CD8-positive, alpha-beta T cell (primary cell): ENCODE measurements at regions of chr1 and their contacts with region 1.

Region 1: DNA sequence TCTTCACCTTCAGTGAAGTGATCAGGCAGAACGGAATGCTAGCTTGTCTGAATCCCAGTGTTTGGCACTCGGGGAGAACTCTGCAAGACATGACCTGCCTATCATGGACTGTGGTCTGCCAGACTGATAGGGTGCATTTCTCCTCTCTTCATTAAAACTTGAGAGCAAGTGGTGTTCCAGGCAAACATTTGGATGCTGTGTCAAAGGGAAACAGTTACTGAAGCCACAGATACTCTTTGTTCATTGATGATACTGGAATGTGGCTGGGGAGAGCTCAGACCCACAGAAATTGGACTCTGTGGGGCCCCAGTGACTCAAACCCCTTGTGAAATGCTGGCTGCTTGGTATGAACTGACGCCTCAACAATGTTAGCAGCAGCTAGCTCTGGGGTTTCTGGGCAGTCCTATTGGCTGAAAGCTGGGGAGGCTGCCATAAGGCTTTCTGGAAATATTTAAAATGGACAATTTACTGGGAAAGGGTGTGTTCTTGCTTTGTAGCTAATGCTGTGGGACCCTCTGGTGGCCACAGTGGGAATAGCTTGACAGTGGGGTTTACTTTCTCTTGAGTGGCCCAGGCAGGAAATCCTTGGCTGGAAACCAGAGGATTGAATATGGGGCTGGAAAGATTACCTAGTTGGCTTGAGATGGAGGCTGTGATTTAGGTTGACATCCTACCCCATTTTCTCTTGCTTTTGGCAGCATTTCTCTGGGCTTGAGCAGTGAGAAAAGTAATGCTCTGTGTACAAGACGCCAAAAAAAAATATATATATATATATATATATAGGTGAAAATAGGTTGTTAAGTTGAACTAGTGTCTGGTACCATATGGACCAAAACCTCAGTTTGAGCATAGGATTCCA is 8.0 kb upstream of the S100A10 start:
- DNase-seq: peak; percentile 59 to 85 (median 79)
- ATAC-seq: peak; percentile 83
- H3K4me3 ChIP-seq: no peak overlapping the region
- H3K4me3 Mint-ChIP-seq: no peak overlapping the region
- H3K27ac ChIP-seq: no peak overlapping the region
- H3K27ac Mint-ChIP-seq: no peak overlapping the region
- H3K4me1 ChIP-seq: no peaks in the 10 kb centered on the region
- H3K4me1 Mint-ChIP-seq: no peaks in the 10 kb centered on the region
- H3K27me3 ChIP-seq: no peaks in the 10 kb centered on the region
- H3K27me3 Mint-ChIP-seq: peaks cover 8% of the 10 kb centered on the region
- CTCF ChIP-seq: peak; percentile 91

Region 2: DNA sequence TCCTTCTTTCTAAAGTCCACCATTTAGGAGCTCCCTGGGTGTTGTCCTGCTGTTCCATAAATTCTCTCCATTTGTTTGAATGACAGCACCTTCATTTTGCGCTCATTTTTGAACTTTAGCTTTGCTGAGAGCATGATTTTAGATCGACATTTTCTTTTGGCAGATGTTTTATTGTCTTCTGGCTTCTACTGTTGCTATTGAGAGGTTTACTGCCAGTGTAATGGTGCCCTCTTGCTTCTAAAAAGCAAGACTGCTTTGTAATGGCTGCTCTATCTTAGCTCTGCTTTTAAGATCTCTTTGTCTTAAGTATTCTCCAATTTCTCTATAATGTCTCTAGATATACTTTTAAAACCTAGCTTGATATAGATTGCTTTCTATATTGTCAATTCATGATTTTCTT is 120.2 kb before region 1 on chr1:
- CTCF ChIA-PET with region 1: interaction called, 18 read pairs
- POLR2A ChIA-PET with region 1: no interaction called
- intact Hi-C with region 1: no loop called
- DNase-seq: peak in 1 of 9 experiments; percentile 20
- ATAC-seq: no peak
- H3K4me3 ChIP-seq: no peak overlapping the region
- H3K4me3 Mint-ChIP-seq: no peak overlapping the region
- H3K27ac ChIP-seq: no peak overlapping the region
- H3K27ac Mint-ChIP-seq: no peak overlapping the region
- H3K4me1 ChIP-seq: no peaks in the 10 kb centered on the region
- H3K4me1 Mint-ChIP-seq: peaks cover 3% of the 10 kb centered on the region
- H3K27me3 ChIP-seq: no peaks in the 10 kb centered on the region
- H3K27me3 Mint-ChIP-seq: no peaks in the 10 kb centered on the region
- CTCF ChIP-seq: no peak

Region 3: GRCh38 chr1:151909150-151910149 is 92.2 kb before region 1 on chr1 and contains the start of gene THEM4:
- CTCF ChIA-PET with region 1: interaction called, 14 read pairs
- POLR2A ChIA-PET with region 1: interaction called, 3 read pairs
- intact Hi-C with region 1: no loop called
- DNase-seq: peak; percentile 83 to 96 (median 91)
- ATAC-seq: peak; percentile 82
- H3K4me3 ChIP-seq: peak within 1 kb of the TSS; percentile 60 to 75
- H3K4me3 Mint-ChIP-seq: peak within 1 kb of the TSS; percentile 83
- H3K27ac ChIP-seq: peak within 1 kb of the TSS; percentile 56 to 89
- H3K27ac Mint-ChIP-seq: peak within 1 kb of the TSS; percentile 85
- H3K4me1 ChIP-seq: peaks cover 49% of the 10 kb centered on the region
- H3K4me1 Mint-ChIP-seq: peaks cover 40% of the 10 kb centered on the region
- H3K27me3 ChIP-seq: no peaks in the 10 kb centered on the region
- H3K27me3 Mint-ChIP-seq: no peaks in the 10 kb centered on the region
- CTCF ChIP-seq: no peak
- total RNA-seq, gene THEM4: 14.3 to 16.8 TPM

Region 4: GRCh38 chr1:151939779-151940178 is 61.8 kb before region 1 on chr1:
- CTCF ChIA-PET with region 1: interaction called, 149 read pairs
- POLR2A ChIA-PET with region 1: interaction called, 3 read pairs
- intact Hi-C with region 1: loop called (anchors 1 kb)
- DNase-seq: no peak
- ATAC-seq: no peak
- H3K4me3 ChIP-seq: no peak overlapping the region
- H3K4me3 Mint-ChIP-seq: no peak overlapping the region
- H3K27ac ChIP-seq: no peak overlapping the region
- H3K27ac Mint-ChIP-seq: no peak overlapping the region
- H3K4me1 ChIP-seq: peaks cover 2% of the 10 kb centered on the region
- H3K4me1 Mint-ChIP-seq: peaks cover 9% of the 10 kb centered on the region
- H3K27me3 ChIP-seq: no peaks in the 10 kb centered on the region
- H3K27me3 Mint-ChIP-seq: no peaks in the 10 kb centered on the region
- CTCF ChIP-seq: no peak

Region 5: DNA sequence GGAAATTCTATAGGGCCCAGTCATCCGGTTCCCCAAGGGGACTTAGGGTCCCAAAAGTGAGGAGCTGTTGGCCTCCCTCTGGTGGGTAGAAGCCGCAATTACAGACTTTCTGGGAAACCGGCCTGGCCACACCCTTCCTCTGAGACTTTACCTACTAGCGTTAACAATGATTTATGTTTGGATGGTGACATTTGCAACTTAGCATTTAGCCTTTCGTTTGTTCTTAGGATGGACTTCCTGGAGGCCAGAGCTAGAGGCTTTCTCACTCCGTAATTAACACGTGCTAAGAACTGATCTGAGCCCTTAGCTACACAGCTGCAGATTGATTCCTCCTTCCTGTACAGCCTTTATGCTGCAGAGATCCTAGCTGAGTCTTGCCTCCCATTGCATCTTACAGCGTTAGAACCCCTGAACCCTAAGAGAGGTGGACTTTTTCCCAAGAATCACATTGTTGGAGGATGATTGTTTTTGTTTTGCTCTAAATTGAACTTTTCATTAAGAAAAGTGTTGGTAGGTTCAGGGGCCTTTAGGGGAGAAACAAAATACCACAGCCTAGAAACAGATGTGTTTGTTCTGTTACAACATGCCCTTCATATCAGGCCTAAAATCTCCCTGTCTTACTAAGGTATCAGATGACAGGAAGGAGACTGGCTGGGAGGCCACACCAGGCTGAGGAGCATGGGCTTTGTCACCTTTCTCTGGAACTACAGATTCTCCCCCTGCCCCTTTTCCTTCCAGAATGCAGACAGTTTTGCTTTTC is 33.2 kb after region 1 on chr1:
- CTCF ChIA-PET with region 1: interaction called, 11 read pairs
- POLR2A ChIA-PET with region 1: interaction called, 4 read pairs
- intact Hi-C with region 1: no loop called
- DNase-seq: peak; percentile 39 to 84 (median 65)
- ATAC-seq: peak; percentile 80
- H3K4me3 ChIP-seq: peak overlapping the region; percentile 65 to 86
- H3K4me3 Mint-ChIP-seq: peak overlapping the region; percentile 96
- H3K27ac ChIP-seq: peak overlapping the region; percentile 63 to 88
- H3K27ac Mint-ChIP-seq: peak overlapping the region; percentile 94
- H3K4me1 ChIP-seq: peaks cover 35% of the 10 kb centered on the region
- H3K4me1 Mint-ChIP-seq: peaks cover 54% of the 10 kb centered on the region
- H3K27me3 ChIP-seq: no peaks in the 10 kb centered on the region
- H3K27me3 Mint-ChIP-seq: no peaks in the 10 kb centered on the region
- CTCF ChIP-seq: peak; percentile 74

Region 6: DNA sequence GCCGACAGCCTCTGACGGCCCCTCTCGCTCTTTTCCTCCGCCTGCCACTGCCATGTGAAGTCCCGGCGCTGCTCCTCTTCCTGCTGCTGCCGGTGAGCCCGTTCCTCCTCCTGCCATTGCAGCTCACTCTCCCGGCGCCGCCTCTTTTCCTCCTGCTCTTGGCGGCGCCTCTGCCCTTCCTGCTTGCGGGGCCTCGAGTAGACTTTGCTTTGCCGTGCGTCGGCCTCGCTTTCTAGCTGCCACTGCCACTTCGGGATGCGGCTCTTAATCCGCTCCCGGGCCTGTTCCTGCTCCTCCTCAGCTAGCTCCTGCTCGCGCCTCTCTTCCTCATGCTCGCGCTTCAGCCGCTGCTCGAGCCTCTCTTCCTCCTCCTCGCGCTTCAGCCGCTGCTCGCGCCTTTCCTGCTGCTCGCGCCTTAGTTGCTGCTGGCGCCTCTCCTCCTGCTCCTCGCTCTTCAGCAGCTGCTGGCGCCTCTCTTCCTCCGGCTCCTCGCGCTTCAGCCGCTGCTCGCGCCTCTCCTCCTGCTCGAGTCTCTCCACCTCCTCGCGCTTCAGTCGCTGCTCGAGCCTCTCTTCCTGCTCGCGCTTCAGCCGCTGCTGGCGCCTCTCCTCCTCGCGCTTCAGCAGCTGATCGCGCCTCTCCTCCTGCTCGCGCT is 109.4 kb after region 1 on chr1:
- CTCF ChIA-PET with region 1: no interaction called
- POLR2A ChIA-PET with region 1: no interaction called
- intact Hi-C with region 1: no loop called
- DNase-seq: peak in 3 of 9 experiments; percentile 9 to 36 (median 31)
- ATAC-seq: no peak
- H3K4me3 ChIP-seq: peak overlapping the region; percentile 41 to 61
- H3K4me3 Mint-ChIP-seq: no peak overlapping the region
- H3K27ac ChIP-seq: no peak overlapping the region
- H3K27ac Mint-ChIP-seq: no peak overlapping the region
- H3K4me1 ChIP-seq: peaks cover 38% of the 10 kb centered on the region
- H3K4me1 Mint-ChIP-seq: no peaks in the 10 kb centered on the region
- H3K27me3 ChIP-seq: peaks cover 51 to 52% of the 10 kb centered on the region in 2 experiments
- H3K27me3 Mint-ChIP-seq: peaks cover 34% of the 10 kb centered on the region
- CTCF ChIP-seq: no peak

Region 7: DNA sequence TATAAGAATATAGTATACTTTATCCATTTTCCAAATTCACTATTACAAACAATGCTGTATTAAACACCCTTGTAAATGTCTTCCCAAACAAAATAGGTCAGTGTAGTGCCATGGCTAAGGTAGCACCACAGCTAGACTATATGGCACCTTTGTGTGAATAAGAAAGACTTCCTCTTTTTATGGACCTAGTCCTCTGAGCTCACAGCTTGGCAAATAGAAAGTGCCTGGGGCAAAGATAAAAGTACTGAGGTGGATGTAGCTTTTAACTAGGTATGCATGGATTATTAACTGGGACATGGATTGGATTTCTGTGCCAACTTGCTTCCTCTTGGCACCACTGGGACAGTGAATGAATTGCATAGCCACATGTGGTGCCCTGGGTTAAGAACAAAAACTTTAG is 197.4 kb after region 1 on chr1:
- CTCF ChIA-PET with region 1: no interaction called
- POLR2A ChIA-PET with region 1: no interaction called
- intact Hi-C with region 1: no loop called
- DNase-seq: no peak
- ATAC-seq: no peak
- H3K4me3 ChIP-seq: no peak overlapping the region
- H3K4me3 Mint-ChIP-seq: no peak overlapping the region
- H3K27ac ChIP-seq: no peak overlapping the region
- H3K27ac Mint-ChIP-seq: no peak overlapping the region
- H3K4me1 ChIP-seq: no peaks in the 10 kb centered on the region
- H3K4me1 Mint-ChIP-seq: no peaks in the 10 kb centered on the region
- H3K27me3 ChIP-seq: peaks cover 0 to 2% of the 10 kb centered on the region in 2 experiments
- H3K27me3 Mint-ChIP-seq: peaks cover 9% of the 10 kb centered on the region
- CTCF ChIP-seq: no peak

Region 8: DNA sequence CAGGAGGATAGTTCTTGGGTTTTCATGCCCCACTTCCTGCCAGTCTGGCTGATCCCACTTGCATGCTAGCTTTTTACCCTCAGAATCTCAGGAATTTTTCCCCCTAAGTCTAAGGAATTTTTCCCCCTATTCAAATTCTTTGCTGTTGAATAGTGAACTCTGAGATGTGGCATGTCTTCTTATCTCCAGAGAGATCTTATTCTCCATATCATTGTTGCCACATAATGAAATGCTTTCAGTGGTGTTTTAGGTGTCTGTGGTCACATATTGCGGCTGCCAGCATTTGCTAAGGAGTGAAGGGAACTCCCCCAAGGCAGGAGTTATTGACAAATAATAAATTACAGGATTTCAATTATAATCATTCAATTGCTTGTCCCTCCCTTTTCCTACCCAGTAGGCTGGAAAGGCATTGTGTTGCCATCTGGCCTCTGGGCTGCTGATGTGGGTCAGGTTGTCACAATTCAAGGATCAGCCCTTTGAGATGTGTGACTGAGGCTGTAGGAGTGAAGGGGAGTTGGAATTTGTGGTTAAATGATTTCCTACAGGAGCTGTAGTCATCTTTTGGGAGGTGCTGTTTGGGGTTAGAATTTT is 327.3 kb after region 1 on chr1:
- CTCF ChIA-PET with region 1: no interaction called
- POLR2A ChIA-PET with region 1: no interaction called
- intact Hi-C with region 1: no loop called
- DNase-seq: no peak
- ATAC-seq: no peak
- H3K4me3 ChIP-seq: no peak overlapping the region
- H3K4me3 Mint-ChIP-seq: no peak overlapping the region
- H3K27ac ChIP-seq: no peak overlapping the region
- H3K27ac Mint-ChIP-seq: no peak overlapping the region
- H3K4me1 ChIP-seq: no peaks in the 10 kb centered on the region
- H3K4me1 Mint-ChIP-seq: no peaks in the 10 kb centered on the region
- H3K27me3 ChIP-seq: no peaks in the 10 kb centered on the region
- H3K27me3 Mint-ChIP-seq: peaks cover 4% of the 10 kb centered on the region
- CTCF ChIP-seq: no peak